Calu3 (cell line): ENCODE measurements at regions of chr22 and their contacts with region 1.

Region 1: GRCh38 chr22:30694171-30694639 is 469 bp upstream of the OSBP2 start:
- DNase-seq: peak; percentile 78
- H3K4me3 Mint-ChIP-seq: peak overlapping the region; percentile 80
- H3K27ac Mint-ChIP-seq: peak overlapping the region; percentile 46
- H3K4me1 Mint-ChIP-seq: no peaks in the 10 kb centered on the region
- H3K27me3 Mint-ChIP-seq: no peaks in the 10 kb centered on the region
- CTCF ChIP-seq: no peak

Region 2: GRCh38 chr22:30754971-30755756 is 61.0 kb after region 1 on chr22:
- CTCF ChIA-PET with region 1: no interaction called
- intact Hi-C with region 1: loop called (anchors 2 kb)
- DNase-seq: peak; percentile 68
- H3K4me3 Mint-ChIP-seq: no peak overlapping the region
- H3K27ac Mint-ChIP-seq: no peak overlapping the region
- H3K4me1 Mint-ChIP-seq: no peaks in the 10 kb centered on the region
- H3K27me3 Mint-ChIP-seq: no peaks in the 10 kb centered on the region
- CTCF ChIP-seq: peak; percentile 64